Sciatic nerve (tissue), 2 donors: ENCODE measurements at regions of chr5 and their contacts with region 1.

Region 1: DNA sequence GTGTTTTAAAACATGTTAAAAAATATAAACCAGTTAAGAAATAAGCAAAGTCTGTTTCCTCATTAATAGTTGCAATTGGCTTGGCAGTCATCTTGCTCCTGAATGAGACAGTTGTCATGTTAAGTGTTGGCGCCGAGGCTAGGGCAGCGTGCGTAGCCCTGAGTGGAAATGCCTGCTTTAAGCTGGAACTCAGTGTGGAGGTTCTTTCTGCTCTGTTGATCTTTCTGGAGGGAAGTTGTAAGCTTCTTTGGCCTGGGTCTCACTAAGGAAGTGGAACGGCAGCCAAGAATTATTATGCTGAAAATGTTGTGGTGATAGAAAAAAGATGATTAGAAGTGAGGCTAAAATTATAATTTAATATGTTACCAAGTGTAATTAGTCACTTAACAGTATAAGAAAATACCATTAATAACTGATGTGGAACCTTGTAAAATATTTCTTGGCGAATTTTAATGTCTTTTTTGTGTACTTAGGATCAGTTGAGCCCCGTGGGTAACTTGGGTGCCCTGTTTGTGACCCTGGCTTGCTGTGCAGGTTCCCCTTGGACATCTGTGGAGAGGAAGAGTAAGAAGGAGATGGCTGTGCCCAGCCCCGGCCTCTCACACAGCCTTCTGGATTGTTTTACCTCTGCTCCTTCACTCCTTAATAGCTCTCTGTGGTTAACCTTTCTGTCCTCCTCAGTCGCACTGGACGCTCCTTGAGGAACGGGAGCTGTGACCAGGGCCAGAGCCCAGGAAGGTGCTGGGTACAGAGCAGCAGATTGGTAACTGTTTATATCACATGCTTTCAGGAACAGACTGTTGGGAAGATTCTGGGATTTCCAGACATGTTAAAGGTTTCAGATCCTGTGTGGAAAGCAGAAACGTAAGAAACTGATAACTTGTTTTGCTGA is 31.0 kb downstream of the PCBD2 start:
- DNase-seq: no peak
- ATAC-seq: peak; percentile 71

Region 2: DNA sequence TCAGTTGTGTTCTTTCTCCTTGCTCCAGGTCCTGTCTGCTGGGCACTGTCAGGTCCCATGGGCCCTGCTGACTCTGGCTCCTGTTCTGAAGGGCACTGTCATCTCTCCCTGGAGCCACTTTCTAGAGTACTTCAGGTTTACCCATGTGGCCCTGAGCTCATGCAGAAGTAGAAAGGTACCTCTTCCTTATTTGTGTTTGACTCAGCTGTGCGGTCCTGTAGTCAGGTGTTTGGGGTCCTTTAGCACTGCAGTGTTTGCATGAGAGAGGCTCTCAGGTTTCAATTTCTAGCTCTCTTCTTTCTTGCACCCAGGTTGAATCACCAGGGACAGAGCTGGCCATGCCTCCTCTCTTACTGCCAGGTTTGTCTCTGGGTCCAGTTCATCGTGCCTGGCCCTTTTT is 1812.7 kb before region 1 on chr5:
- intact Hi-C with region 1: loop called (anchors 5 kb)
- DNase-seq: no peak
- ATAC-seq: no peak